Caco-2 (cell line): ENCODE measurements at regions of chr7 and their contacts with region 1.

Region 1: DNA sequence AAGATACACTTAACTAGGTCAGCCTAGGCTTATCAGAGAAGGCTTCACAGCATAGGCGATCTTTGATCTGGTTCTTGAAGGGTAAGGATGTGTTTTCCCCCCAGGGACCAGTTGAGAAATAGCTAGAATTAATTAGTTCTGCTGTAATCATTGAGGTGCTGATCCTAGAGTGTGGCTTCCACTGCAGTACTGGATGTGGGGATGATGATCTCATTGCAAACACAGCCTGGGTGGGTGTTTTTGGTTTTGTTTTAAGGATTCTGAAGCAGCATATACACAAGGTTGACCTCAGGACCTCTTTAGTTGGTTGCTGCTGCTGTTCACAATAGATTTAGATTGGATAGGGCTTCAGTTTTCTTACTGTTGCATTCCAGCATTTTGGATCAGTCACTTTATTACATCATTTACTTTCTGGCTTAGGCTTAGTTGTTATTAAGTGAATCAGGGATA is 159.7 kb downstream of the AUTS2 start:
- DNase-seq: no peak
- H3K4me3 ChIP-seq: no peak overlapping the region
- H3K4me3 Mint-ChIP-seq: no peak overlapping the region
- H3K27ac Mint-ChIP-seq: no peak overlapping the region
- H3K4me1 ChIP-seq: no peaks in the 10 kb centered on the region; the same call in 1 of the 2 replicates
- H3K4me1 Mint-ChIP-seq: peaks cover 19% of the 10 kb centered on the region
- H3K27me3 ChIP-seq: no peaks in the 10 kb centered on the region
- H3K27me3 Mint-ChIP-seq: no peaks in the 10 kb centered on the region
- CTCF ChIP-seq: no peak

Region 2: GRCh38 chr7:69732222-69732621 is 25.8 kb before region 1 on chr7:
- CTCF ChIA-PET with region 1: no interaction called
- POLR2A ChIA-PET with region 1: no interaction called
- intact Hi-C with region 1: no loop called
- DNase-seq: peak in 1 of 2 experiments; percentile 38
- H3K4me3 ChIP-seq: no peak overlapping the region
- H3K4me3 Mint-ChIP-seq: no peak overlapping the region
- H3K27ac Mint-ChIP-seq: no peak overlapping the region
- H3K4me1 ChIP-seq: no peaks in the 10 kb centered on the region
- H3K4me1 Mint-ChIP-seq: peaks cover 8% of the 10 kb centered on the region
- H3K27me3 ChIP-seq: no peaks in the 10 kb centered on the region
- H3K27me3 Mint-ChIP-seq: no peaks in the 10 kb centered on the region
- CTCF ChIP-seq: no peak

Region 3: GRCh38 chr7:69796416-69796815 is 38.4 kb after region 1 on chr7:
- CTCF ChIA-PET with region 1: no interaction called
- POLR2A ChIA-PET with region 1: interaction called, 10 read pairs
- intact Hi-C with region 1: no loop called
- DNase-seq: no peak
- H3K4me3 ChIP-seq: no peak overlapping the region
- H3K4me3 Mint-ChIP-seq: no peak overlapping the region
- H3K27ac Mint-ChIP-seq: peak overlapping the region; percentile 39
- H3K4me1 ChIP-seq: peaks cover 20% of the 10 kb centered on the region
- H3K4me1 Mint-ChIP-seq: peaks cover 16% of the 10 kb centered on the region
- H3K27me3 ChIP-seq: no peaks in the 10 kb centered on the region
- H3K27me3 Mint-ChIP-seq: no peaks in the 10 kb centered on the region
- CTCF ChIP-seq: no peak